Natural killer cell (primary cell): ENCODE measurements at regions of chr12 and their contacts with region 1.

Region 1: GRCh38 chr12:85468356-85469157 is 188.5 kb downstream of the ALX1 start:
- DNase-seq: peak in 1 of 2 donors; percentile 35
- ATAC-seq: peak; percentile 72 to 90 (median 87)
- H3K4me3 ChIP-seq: peak overlapping the region; percentile 31
- H3K4me3 Mint-ChIP-seq: peak overlapping the region; percentile 95
- H3K27ac ChIP-seq: peak overlapping the region; percentile 35
- H3K27ac Mint-ChIP-seq: peak overlapping the region; percentile 83 to 91
- H3K4me1 ChIP-seq: peaks cover 8% of the 10 kb centered on the region
- H3K4me1 Mint-ChIP-seq: peaks cover 39 to 44% of the 10 kb centered on the region in 2 donors
- H3K27me3 ChIP-seq: no peaks in the 10 kb centered on the region
- H3K27me3 Mint-ChIP-seq: no peaks in the 10 kb centered on the region
- CTCF ChIP-seq: peak; percentile 69

Region 2: DNA sequence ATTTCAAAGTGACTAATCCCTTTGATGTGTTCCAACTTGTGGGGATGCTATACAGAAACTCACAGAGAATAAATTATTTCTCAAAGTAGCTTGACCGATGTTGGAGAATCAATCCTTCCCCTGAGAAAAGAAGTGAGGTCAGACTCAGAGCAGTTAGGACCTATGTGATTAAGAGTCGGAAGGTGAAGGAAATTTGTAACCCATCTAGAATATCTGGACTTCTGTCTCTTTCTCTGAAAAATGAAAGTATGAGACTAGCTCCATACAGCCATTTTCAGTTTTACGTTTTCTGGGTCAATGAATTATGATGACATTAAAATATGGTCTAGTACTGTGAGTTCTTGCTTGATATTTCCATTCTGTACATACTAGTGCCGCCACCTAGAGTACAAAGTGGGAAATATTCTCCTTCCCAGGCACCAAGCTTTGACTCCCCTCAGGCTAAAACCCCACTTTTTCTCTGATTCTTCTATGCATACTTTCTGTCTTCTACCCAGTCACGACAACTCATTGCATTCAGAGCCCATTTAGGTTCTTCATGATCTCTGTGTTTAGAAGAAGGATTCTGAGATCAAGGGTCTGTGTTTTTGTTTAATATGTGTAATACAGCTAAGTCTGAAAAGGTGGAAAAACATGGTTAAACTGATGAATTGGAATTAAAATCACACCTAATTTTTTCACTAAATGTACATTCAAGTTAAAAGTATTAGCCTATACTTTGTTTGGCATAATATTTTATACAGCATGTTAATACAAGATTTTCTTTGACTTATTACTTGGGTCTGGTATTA is 398.6 kb after region 1 on chr12:
- intact Hi-C with region 1: loop called (anchors 2 kb)
- DNase-seq: peak in 1 of 2 donors; percentile 15
- ATAC-seq: peak; percentile 54 to 75 (median 75)
- H3K4me3 ChIP-seq: no peak overlapping the region
- H3K4me3 Mint-ChIP-seq: no peak overlapping the region
- H3K27ac ChIP-seq: no peak overlapping the region
- H3K27ac Mint-ChIP-seq: no peak overlapping the region
- H3K4me1 ChIP-seq: no peaks in the 10 kb centered on the region
- H3K4me1 Mint-ChIP-seq: peaks cover 0 to 5% of the 10 kb centered on the region in 2 donors
- H3K27me3 ChIP-seq: no peaks in the 10 kb centered on the region
- H3K27me3 Mint-ChIP-seq: peaks cover 0 to 8% of the 10 kb centered on the region in 2 donors
- CTCF ChIP-seq: peak; percentile 64

Region 3: DNA sequence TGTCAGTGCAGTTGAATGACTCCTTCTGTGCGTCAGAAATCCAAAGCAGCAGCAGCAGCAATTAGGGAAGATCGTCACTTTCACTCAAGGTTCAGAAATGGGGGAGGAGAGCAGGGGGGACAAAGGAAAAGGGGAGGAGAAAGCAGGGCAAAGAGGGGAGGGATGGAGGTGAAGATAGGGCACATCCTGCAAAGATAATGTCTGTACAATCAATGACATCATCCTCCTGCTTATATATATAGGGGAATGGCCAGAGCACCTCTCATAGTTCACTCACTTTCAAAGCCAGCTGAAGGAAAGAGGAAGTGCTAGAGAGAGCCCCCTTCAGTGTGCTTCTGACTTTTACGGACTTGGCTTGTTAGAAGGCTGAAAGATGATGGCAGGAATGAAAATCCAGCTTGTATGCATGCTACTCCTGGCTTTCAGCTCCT is 405.5 kb after region 1 on chr12 and contains the start of gene NTS:
- intact Hi-C with region 1: loop called (anchors 2 kb)
- DNase-seq: no peak
- ATAC-seq: no peak
- H3K4me3 ChIP-seq: no peak within 1 kb of the TSS
- H3K4me3 Mint-ChIP-seq: no peak within 1 kb of the TSS
- H3K27ac ChIP-seq: no peak within 1 kb of the TSS
- H3K27ac Mint-ChIP-seq: no peak within 1 kb of the TSS
- H3K4me1 ChIP-seq: no peaks in the 10 kb centered on the region
- H3K4me1 Mint-ChIP-seq: no peaks in the 10 kb centered on the region
- H3K27me3 ChIP-seq: no peaks in the 10 kb centered on the region
- H3K27me3 Mint-ChIP-seq: peaks cover 0 to 8% of the 10 kb centered on the region in 2 donors
- CTCF ChIP-seq: no peak
- total RNA-seq, gene NTS: not detected